ENCODE measurements at regions of chr12 and their contacts with region 1.

Region 1: GRCh38 chr12:1605129-1606020 is 11.0 kb upstream of the FBXL14 start:
- H3K4me3 ChIP-seq: peak overlapping the region; percentile 47
- H3K27ac ChIP-seq: peak overlapping the region; percentile 78
- H3K4me1 ChIP-seq: peaks cover 6% of the 10 kb centered on the region; the same call in 1 of the 2 replicates
- CTCF ChIP-seq: peak; percentile 97

Region 2: GRCh38 chr12:1553987-1554982 is 51.1 kb before region 1 on chr12:
- CTCF ChIA-PET with region 1: no interaction called
- POLR2A ChIA-PET with region 1: no interaction called
- H3K4me3 ChIP-seq: no peak overlapping the region
- H3K27ac ChIP-seq: no peak overlapping the region
- H3K4me1 ChIP-seq: no peaks in the 10 kb centered on the region
- CTCF ChIP-seq: no peak

Region 3: DNA sequence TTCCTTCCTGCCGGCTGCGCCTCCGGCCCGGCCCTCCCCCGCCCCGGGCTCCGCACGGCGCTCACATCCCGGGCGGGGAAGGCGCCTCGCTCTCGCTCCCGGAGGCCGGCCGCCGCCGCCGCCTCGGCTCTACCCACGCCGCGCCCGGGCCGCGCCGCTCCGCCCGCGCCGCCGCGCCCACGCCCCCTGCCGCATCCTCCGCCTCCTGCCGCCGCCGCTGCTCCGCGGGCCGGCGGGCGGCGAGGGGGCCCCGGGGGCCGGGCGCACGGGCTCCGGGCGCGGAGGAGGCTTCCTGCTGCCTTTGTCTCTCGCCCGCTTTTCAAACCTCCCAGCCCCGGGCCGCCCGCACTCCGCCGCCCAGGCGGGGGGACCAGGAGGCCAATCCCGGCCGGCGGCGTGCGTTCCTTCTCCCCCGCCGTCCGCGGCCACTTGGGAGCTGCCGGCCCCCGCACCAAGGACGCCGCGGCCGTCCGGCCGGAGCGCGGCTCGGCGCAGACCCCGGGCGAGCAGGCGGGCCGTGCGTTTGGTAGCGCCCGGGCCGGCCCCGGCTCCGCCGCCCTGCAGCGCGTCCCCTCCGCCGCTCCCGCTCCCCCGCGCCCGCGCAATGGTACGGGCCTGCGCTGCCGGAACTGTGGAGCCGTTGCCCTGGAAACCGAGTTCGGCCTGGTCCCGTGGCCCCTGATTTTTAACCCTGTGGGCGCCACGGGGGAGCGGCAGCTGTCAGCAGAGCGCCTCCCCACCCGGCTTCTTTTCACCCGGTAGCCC is 10.9 kb before region 1 on chr12 and contains the start of gene FBXL14:
- CTCF ChIA-PET with region 1: interaction called, 17 read pairs
- POLR2A ChIA-PET with region 1: interaction called, 22 read pairs
- H3K4me3 ChIP-seq: peak within 1 kb of the TSS; percentile 78
- H3K27ac ChIP-seq: peak within 1 kb of the TSS; percentile 97
- H3K4me1 ChIP-seq: peaks cover 18% of the 10 kb centered on the region
- CTCF ChIP-seq: no peak; the same call in none of the 2 replicates

Region 4: GRCh38 chr12:1643905-1644533 is 38.6 kb after region 1 on chr12:
- CTCF ChIA-PET with region 1: no interaction called
- POLR2A ChIA-PET with region 1: no interaction called
- H3K4me3 ChIP-seq: no peak overlapping the region
- H3K27ac ChIP-seq: no peak overlapping the region
- H3K4me1 ChIP-seq: peaks cover 2% of the 10 kb centered on the region; the same call in 1 of the 2 replicates
- CTCF ChIP-seq: no peak

Region 5: GRCh38 chr12:1880153-1880845 is 274.9 kb after region 1 on chr12:
- CTCF ChIA-PET with region 1: no interaction called
- POLR2A ChIA-PET with region 1: no interaction called
- H3K4me3 ChIP-seq: no peak overlapping the region
- H3K27ac ChIP-seq: no peak overlapping the region
- H3K4me1 ChIP-seq: no peaks in the 10 kb centered on the region
- CTCF ChIP-seq: no peak